ENCODE measurements at regions of chr4 and their contacts with region 1.

Region 1: GRCh38 chr4:40309250-40309774 is 25.8 kb upstream of the CHRNA9 start:
- DNase-seq: peak; percentile 82 to 96 (median 91)
- ATAC-seq: peak; percentile 62
- H3K4me3 ChIP-seq: peak overlapping the region; percentile 36
- H3K4me3 Mint-ChIP-seq: peak overlapping the region; percentile 85
- H3K27ac ChIP-seq: peak overlapping the region; percentile 86 to 93
- H3K27ac Mint-ChIP-seq: peak overlapping the region; percentile 99
- H3K4me1 ChIP-seq: peaks cover 81% of the 10 kb centered on the region
- H3K4me1 Mint-ChIP-seq: peaks cover 87% of the 10 kb centered on the region
- H3K27me3 ChIP-seq: no peaks in the 10 kb centered on the region
- H3K27me3 Mint-ChIP-seq: no peaks in the 10 kb centered on the region
- CTCF ChIP-seq: peak; percentile 93

Region 2: GRCh38 chr4:40149960-40150385 is 159.3 kb before region 1 on chr4:
- CTCF ChIA-PET with region 1: interaction called, 12 read pairs
- POLR2A ChIA-PET with region 1: interaction called, 10 read pairs
- intact Hi-C with region 1: loop called (anchors 1 kb)
- DNase-seq: peak; percentile 51 to 89 (median 61)
- ATAC-seq: peak; percentile 88
- H3K4me3 ChIP-seq: no peak overlapping the region
- H3K4me3 Mint-ChIP-seq: no peak overlapping the region
- H3K27ac ChIP-seq: no peak overlapping the region
- H3K27ac Mint-ChIP-seq: peak overlapping the region; percentile 66
- H3K4me1 ChIP-seq: peaks cover 2% of the 10 kb centered on the region
- H3K4me1 Mint-ChIP-seq: peaks cover 45% of the 10 kb centered on the region
- H3K27me3 ChIP-seq: no peaks in the 10 kb centered on the region
- H3K27me3 Mint-ChIP-seq: no peaks in the 10 kb centered on the region
- CTCF ChIP-seq: peak; percentile 89

Region 3: GRCh38 chr4:40205259-40206198 is 103.8 kb before region 1 on chr4:
- CTCF ChIA-PET with region 1: interaction called, 7 read pairs
- POLR2A ChIA-PET with region 1: interaction called, 98 read pairs
- intact Hi-C with region 1: loop called in 1 of 2 experiments (anchors 5 kb)
- DNase-seq: peak in 4 of 14 experiments; percentile 41 to 76 (median 70)
- ATAC-seq: peak; percentile 41
- H3K4me3 ChIP-seq: peak overlapping the region; percentile 74
- H3K4me3 Mint-ChIP-seq: peak overlapping the region; percentile 100
- H3K27ac ChIP-seq: peak overlapping the region; percentile 93 to 99
- H3K27ac Mint-ChIP-seq: peak overlapping the region; percentile 99
- H3K4me1 ChIP-seq: peaks cover 42% of the 10 kb centered on the region
- H3K4me1 Mint-ChIP-seq: peaks cover 79% of the 10 kb centered on the region
- H3K27me3 ChIP-seq: no peaks in the 10 kb centered on the region
- H3K27me3 Mint-ChIP-seq: no peaks in the 10 kb centered on the region
- CTCF ChIP-seq: no peak

Region 4: GRCh38 chr4:40228497-40229365 is 80.6 kb before region 1 on chr4:
- CTCF ChIA-PET with region 1: interaction called, 6 read pairs
- POLR2A ChIA-PET with region 1: interaction called, 72 read pairs
- intact Hi-C with region 1: loop called in 1 of 2 experiments (anchors 2 kb)
- DNase-seq: peak in 1 of 14 experiments; percentile 52
- ATAC-seq: no peak
- H3K4me3 ChIP-seq: peak overlapping the region; percentile 8
- H3K4me3 Mint-ChIP-seq: peak overlapping the region; percentile 49
- H3K27ac ChIP-seq: peak overlapping the region; percentile 70 to 82
- H3K27ac Mint-ChIP-seq: peak overlapping the region; percentile 93
- H3K4me1 ChIP-seq: peaks cover 86% of the 10 kb centered on the region
- H3K4me1 Mint-ChIP-seq: peaks cover 91% of the 10 kb centered on the region
- H3K27me3 ChIP-seq: no peaks in the 10 kb centered on the region
- H3K27me3 Mint-ChIP-seq: no peaks in the 10 kb centered on the region
- CTCF ChIP-seq: peak; percentile 37

Region 5: DNA sequence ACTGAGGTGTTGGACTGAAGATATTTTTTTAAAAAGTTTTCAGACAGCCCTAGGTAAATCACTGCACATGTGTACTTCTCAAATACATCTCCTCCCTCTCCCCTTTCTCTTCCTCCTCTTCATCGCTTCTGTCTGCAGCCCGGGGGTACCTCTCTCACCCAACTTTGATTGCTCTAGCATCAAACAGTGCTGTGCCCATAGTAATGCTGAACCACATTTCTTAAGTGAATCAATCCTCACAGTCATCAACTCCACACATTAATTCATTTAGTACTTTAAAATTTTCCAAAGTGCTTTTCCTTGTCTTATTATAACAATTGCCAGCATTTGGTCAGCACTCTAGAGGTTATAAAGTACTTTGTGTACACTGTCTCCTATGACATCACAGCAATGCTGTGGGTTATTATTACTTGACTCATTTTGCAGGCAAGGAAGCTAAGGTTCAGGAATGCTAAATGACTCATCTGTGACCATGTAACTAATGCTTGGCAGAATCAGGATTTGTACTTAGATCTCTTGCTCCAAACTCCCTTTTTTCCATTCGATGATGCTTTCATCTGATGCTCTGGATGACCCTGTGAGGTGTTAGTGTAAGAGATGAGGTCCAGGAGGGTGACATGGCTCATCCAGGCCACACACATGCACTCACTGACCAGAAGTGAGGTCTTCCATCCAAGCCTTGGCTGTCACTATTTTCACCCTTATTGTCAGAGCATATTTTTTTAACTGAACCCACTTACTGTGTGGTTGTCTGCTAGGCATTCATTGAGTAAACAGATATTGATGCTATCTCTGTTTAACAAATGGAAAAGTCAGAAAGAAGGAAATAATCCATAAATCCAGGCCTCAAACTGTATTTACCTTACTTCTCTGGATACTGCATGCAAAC is 53.7 kb before region 1 on chr4:
- CTCF ChIA-PET with region 1: interaction called, 3 read pairs
- POLR2A ChIA-PET with region 1: interaction called, 41 read pairs
- intact Hi-C with region 1: no loop called
- DNase-seq: no peak
- ATAC-seq: peak; percentile 43
- H3K4me3 ChIP-seq: no peak overlapping the region
- H3K4me3 Mint-ChIP-seq: peak overlapping the region; percentile 40
- H3K27ac ChIP-seq: peak overlapping the region in 1 of 2 donors; percentile 35
- H3K27ac Mint-ChIP-seq: peak overlapping the region; percentile 85
- H3K4me1 ChIP-seq: peaks cover 59% of the 10 kb centered on the region
- H3K4me1 Mint-ChIP-seq: peaks cover 79% of the 10 kb centered on the region
- H3K27me3 ChIP-seq: no peaks in the 10 kb centered on the region
- H3K27me3 Mint-ChIP-seq: no peaks in the 10 kb centered on the region
- CTCF ChIP-seq: no peak

Region 6: DNA sequence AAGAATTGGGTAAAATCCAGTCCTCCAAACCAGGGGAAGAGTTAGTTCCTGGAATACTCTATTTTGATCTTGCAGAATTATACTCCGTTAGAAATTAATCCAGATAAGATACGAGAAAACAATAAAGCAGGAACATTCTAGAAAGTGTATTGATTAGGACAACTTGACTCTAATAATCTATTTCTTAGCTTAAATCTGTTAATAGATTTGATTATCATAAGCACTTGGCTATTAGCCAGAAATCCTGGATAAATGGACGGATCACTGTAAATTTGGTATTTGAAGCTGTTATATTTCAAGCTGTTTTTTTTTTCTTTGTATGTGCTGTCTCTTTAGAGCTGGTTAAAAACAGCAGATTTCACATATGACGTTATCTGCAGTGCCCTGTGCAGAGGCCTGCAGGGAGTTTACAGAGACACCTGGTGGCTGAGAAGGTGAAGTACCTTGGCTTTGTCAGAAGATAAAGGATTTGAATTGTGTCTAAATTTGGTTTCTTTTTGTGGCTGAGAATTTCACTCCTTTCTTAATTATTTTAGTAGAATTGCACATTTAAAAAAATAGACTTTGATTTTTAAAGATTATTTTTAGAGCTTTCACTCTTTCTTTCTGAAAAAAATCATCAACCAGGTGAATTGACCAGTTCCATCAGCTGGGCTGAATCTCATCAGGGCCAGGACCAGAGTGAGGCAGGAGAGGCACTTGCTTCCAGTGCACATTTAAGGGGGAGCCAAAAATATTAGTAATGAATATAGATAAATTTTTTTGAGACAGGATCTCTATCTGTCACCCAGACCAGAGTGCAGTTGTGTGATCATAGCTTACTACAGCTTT is 16.1 kb after region 1 on chr4:
- CTCF ChIA-PET with region 1: interaction called, 38 read pairs
- POLR2A ChIA-PET with region 1: interaction called, 13 read pairs
- intact Hi-C with region 1: no loop called
- DNase-seq: peak; percentile 46 to 89 (median 56)
- ATAC-seq: peak; percentile 100
- H3K4me3 ChIP-seq: no peak overlapping the region
- H3K4me3 Mint-ChIP-seq: no peak overlapping the region
- H3K27ac ChIP-seq: no peak overlapping the region
- H3K27ac Mint-ChIP-seq: peak overlapping the region; percentile 6
- H3K4me1 ChIP-seq: no peaks in the 10 kb centered on the region
- H3K4me1 Mint-ChIP-seq: peaks cover 21% of the 10 kb centered on the region
- H3K27me3 ChIP-seq: no peaks in the 10 kb centered on the region
- H3K27me3 Mint-ChIP-seq: no peaks in the 10 kb centered on the region
- CTCF ChIP-seq: peak; percentile 89

Measured in CD4-positive, alpha-beta T cell (primary cell).